ENCODE measurements at regions of chr20 and their contacts with region 1.

Region 1: DNA sequence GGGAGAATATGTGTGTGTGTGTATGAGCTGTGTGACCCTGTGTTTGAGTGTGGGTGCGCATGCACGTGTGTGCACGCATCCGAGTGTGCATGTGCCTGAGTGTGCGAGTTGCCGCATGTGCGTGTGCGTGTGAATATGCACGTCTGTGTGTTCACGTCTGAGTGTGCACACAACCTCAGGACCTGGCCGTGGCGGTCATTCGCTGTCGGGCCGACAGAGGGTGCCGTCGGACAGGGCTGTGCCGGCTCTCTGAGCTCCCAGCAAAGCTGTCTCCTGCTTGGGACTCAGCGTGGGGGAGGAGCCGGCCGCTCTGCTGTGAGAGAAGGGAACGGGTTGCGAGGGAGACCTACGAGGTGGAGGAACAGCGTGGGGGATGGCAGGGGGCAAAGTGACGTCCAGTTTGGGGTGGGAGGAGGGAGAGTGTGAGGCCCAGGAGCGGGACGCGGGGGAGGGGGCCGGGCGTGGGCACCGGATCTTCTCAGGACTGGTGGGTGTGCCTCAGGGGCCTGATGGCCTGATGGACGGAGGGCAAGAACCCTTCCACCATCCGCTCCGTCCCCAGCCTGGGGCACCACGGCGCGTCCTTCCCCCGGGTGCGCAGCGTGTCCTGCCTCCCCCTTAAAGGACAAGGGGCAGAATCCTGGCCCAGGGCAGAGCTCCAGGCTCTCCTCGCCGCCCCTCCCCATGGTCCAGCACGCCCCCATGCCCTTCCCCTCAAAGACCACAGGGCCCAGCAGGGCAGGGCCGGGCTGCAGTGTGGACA is 19.9 kb downstream of the SLC17A9 start:
- DNase-seq: peak; percentile 94
- ATAC-seq: peak; percentile 87
- H3K4me3 Mint-ChIP-seq: peak overlapping the region; percentile 60
- H3K27ac Mint-ChIP-seq: no peak overlapping the region
- H3K4me1 Mint-ChIP-seq: peaks cover 30% of the 10 kb centered on the region
- H3K27me3 Mint-ChIP-seq: peaks cover 49% of the 10 kb centered on the region
- CTCF ChIP-seq: peak; percentile 66

Region 2: GRCh38 chr20:62953839-62954703 is 18.4 kb before region 1 on chr20:
- CTCF ChIA-PET with region 1: interaction called, 24 read pairs
- POLR2A ChIA-PET with region 1: no interaction called
- DNase-seq: peak; percentile 53
- ATAC-seq: peak; percentile 61
- H3K4me3 Mint-ChIP-seq: peak overlapping the region; percentile 65
- H3K27ac Mint-ChIP-seq: peak overlapping the region; percentile 84
- H3K4me1 Mint-ChIP-seq: peaks cover 17% of the 10 kb centered on the region
- H3K27me3 Mint-ChIP-seq: no peaks in the 10 kb centered on the region
- CTCF ChIP-seq: no peak

Region 3: GRCh38 chr20:62995898-62996595 is 23.6 kb after region 1 on chr20:
- CTCF ChIA-PET with region 1: interaction called, 19 read pairs
- POLR2A ChIA-PET with region 1: no interaction called
- DNase-seq: no peak
- ATAC-seq: no peak
- H3K4me3 Mint-ChIP-seq: no peak overlapping the region
- H3K27ac Mint-ChIP-seq: no peak overlapping the region
- H3K4me1 Mint-ChIP-seq: peaks cover 10% of the 10 kb centered on the region
- H3K27me3 Mint-ChIP-seq: peaks cover 28% of the 10 kb centered on the region
- CTCF ChIP-seq: no peak

Region 4: GRCh38 chr20:63025534-63026331 is 53.3 kb after region 1 on chr20:
- CTCF ChIA-PET with region 1: interaction called, 14 read pairs
- POLR2A ChIA-PET with region 1: no interaction called
- DNase-seq: peak; percentile 22
- ATAC-seq: no peak
- H3K4me3 Mint-ChIP-seq: no peak overlapping the region
- H3K27ac Mint-ChIP-seq: no peak overlapping the region
- H3K4me1 Mint-ChIP-seq: peaks cover 16% of the 10 kb centered on the region
- H3K27me3 Mint-ChIP-seq: peaks cover 4% of the 10 kb centered on the region; the same call in 1 of the 2 replicates
- CTCF ChIP-seq: no peak

Region 5: DNA sequence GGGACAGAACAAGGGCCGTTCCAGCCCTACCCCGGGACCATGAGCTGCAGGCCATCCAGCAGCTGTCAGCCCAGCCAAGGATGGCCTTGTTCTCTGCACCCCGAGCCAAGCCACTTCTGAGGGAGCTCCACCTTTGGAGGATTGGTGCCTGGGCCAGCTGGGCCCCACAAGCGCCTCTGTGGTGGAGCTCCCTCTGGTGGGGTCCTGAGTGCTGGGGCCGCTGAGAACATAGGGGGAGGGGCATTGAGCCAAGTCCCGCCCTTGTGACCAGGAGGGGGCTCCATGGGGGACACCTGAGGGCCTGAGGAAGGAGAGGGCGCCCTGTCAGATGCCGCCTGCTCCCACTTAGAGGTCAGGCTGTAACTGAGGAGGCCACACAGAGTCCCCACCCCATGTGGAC is 200.3 kb after region 1 on chr20:
- CTCF ChIA-PET with region 1: interaction called, 12 read pairs
- POLR2A ChIA-PET with region 1: no interaction called
- DNase-seq: peak; percentile 74
- ATAC-seq: peak; percentile 58
- H3K4me3 Mint-ChIP-seq: no peak overlapping the region
- H3K27ac Mint-ChIP-seq: no peak overlapping the region
- H3K4me1 Mint-ChIP-seq: peaks cover 6% of the 10 kb centered on the region
- H3K27me3 Mint-ChIP-seq: peaks cover 56% of the 10 kb centered on the region
- CTCF ChIP-seq: peak; percentile 25; the same call in 1 of the 2 replicates

Measured in WTC11 (cell line).